ENCODE measurements at regions of chr17 and their contacts with region 1.

Region 1: DNA sequence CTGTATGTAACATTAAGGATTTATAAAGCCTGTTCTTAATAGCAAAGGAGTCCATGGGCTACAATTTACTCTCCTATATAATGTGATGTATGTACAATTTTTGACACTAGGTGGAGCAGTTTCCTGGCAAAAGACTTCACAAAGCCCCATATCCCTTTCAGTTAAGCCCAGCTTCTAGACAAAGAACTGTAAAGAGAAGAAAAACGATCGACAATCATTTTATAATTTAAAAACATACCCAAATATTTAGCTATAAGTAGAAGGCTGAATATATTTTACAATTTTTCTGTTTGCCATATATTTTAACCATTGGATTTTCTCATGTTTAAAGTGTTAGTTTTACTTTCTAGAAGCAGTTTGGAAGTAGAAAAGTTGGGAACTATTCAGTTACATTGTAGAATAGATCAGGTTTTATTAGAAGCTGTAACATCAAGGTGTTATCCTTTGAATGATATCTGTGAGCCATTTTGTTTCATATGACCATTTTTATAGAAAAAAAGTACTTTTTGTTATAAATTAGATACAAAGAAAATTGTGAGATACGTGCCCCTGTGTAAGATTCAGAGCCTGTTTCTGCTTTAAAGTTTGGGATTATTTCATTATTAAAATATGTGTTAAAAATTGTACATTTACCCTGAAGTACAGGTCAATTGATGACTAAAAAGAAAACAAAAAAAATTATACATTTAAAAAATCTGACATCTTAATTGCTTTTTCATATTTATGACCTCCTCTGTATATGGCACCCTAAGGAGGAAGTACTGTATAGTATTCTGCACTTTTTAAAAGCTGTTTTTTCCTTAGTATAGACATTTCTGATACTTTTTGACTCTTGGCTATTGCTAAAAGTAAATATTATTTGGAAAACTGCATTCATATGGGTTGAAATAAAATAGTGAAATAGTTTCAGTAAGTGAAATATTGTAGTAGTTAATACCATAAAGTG is 46.3 kb downstream of the VMP1 start:
- DNase-seq: peak in 1 of 2 donors; percentile 93
- H3K4me3 ChIP-seq: peak overlapping the region in 1 of 4 donors; percentile 7
- H3K27ac ChIP-seq: peak overlapping the region in 4 of 5 donors; percentile 58 to 73 (median 66)
- H3K4me1 ChIP-seq: peaks cover 4 to 62% (median 18%) of the 10 kb centered on the region in 4 donors
- H3K27me3 ChIP-seq: no peaks in the 10 kb centered on the region
- CTCF ChIP-seq: peak in 5 of 7 experiments; percentile 40 to 76 (median 65)
- EP300 ChIP-seq: no peak
- POLR2A ChIP-seq: no peak

Region 2: GRCh38 chr17:59859444-59860025 is 105.7 kb after region 1 on chr17:
- intact Hi-C with region 1: loop called (anchors 10 kb)
- DNase-seq: peak in 1 of 2 donors; percentile 78
- H3K4me3 ChIP-seq: no peak overlapping the region
- H3K27ac ChIP-seq: peak overlapping the region in 4 of 5 donors; percentile 95 to 100 (median 97)
- H3K4me1 ChIP-seq: peaks cover 11 to 64% (median 34%) of the 10 kb centered on the region in 4 donors
- H3K27me3 ChIP-seq: no peaks in the 10 kb centered on the region
- CTCF ChIP-seq: peak in 4 of 7 experiments; percentile 33 to 69 (median 60)
- EP300 ChIP-seq: no peak
- POLR2A ChIP-seq: no peak